Colonic mucosa (tissue), 4 donors: ENCODE measurements at regions of chr14 and their contacts with region 1.

Region 1: GRCh38 chr14:31510222-31510621 is 22.4 kb upstream of the GPR33 start:
- DNase-seq: no peak
- H3K4me3 ChIP-seq: no peak overlapping the region
- H3K27ac ChIP-seq: no peak overlapping the region
- H3K4me1 ChIP-seq: no peaks in the 10 kb centered on the region
- H3K27me3 ChIP-seq: no peaks in the 10 kb centered on the region
- CTCF ChIP-seq: peak; percentile 66

Region 2: GRCh38 chr14:31229638-31230229 is 280.5 kb before region 1 on chr14:
- intact Hi-C with region 1: no loop called
- DNase-seq: peak; percentile 87
- H3K4me3 ChIP-seq: no peak overlapping the region
- H3K27ac ChIP-seq: peak overlapping the region; percentile 84
- H3K4me1 ChIP-seq: peaks cover 5% of the 10 kb centered on the region
- H3K27me3 ChIP-seq: no peaks in the 10 kb centered on the region
- CTCF ChIP-seq: no peak

Region 3: DNA sequence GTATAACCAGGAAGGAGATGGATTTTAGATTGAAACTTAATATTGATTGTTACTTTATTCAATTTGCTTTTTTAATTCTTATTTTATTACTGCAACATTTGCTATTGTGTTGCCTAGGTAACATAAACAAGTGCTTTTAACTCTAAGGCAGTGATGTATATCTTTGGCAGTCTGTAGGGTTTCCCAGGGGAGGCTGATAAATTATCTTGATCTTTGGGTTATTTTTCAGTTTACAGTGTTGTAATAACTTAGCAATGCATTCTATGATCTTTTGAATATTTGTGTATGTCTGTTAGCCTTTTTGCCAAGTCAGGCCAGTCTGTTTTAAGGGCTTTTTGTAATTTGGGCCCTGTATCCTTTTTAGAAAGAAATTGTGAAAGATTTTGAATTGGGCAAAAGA is 45.1 kb before region 1 on chr14:
- intact Hi-C with region 1: no loop called
- DNase-seq: no peak
- H3K4me3 ChIP-seq: no peak overlapping the region
- H3K27ac ChIP-seq: no peak overlapping the region
- H3K4me1 ChIP-seq: no peaks in the 10 kb centered on the region
- H3K27me3 ChIP-seq: no peaks in the 10 kb centered on the region
- CTCF ChIP-seq: no peak

Region 4: DNA sequence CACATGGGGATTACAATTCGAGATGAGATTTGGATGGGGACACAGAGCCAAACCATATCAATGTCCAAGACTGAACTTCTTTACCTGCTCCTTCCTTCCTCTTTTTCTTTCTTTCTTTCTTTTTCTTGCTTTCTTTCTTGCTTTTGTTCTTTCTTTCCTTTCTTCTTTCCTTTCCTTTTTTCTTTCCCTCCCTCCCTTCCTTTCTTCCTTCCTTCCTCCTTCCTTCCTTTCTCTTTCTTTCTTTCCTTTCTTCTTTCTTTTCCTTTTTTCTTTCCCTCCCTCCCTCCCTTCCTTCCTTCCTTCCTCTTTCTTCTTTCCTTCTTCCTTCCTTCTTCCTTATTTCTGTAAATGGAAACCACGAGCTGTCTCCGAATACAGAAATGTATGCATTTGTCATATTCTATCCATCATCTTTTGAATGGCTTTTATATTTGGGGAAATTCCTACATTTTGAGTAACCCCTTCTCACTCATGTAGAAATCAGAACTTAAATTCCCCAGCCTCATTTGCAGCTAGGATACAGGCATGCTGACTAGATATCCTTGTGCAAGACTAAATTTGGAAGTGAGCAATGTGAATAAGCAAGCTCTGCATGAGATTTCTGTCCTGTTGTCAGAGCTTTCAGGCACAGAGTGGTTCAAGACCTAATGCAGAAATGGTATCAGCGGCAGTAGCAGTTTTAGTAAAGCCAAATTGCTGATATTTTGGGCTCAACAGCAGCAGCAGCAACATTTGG is 33.9 kb before region 1 on chr14:
- intact Hi-C with region 1: no loop called
- DNase-seq: no peak
- H3K4me3 ChIP-seq: no peak overlapping the region
- H3K27ac ChIP-seq: no peak overlapping the region
- H3K4me1 ChIP-seq: no peaks in the 10 kb centered on the region
- H3K27me3 ChIP-seq: no peaks in the 10 kb centered on the region
- CTCF ChIP-seq: no peak

Region 5: DNA sequence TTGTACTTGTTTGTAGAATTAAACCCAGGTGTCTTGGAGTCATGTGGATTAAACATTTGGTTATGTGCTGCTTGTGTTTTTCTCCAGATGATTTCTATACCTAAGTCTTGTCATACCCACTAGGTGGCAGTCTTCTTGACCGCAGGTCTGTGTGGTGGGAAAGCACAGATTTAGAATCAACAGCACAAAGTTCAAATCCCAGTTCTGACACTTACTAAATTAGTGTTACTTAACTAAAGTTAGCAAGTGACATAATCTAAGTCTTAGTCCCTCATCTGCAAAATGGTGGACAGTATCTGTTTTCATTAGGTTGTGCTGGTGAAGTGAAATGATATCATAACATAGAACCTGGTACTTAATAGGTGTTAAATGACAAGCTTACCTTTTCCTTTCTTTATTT is 415.9 kb after region 1 on chr14:
- intact Hi-C with region 1: loop called (anchors 10 kb)
- DNase-seq: no peak
- H3K4me3 ChIP-seq: no peak overlapping the region
- H3K27ac ChIP-seq: no peak overlapping the region
- H3K4me1 ChIP-seq: no peaks in the 10 kb centered on the region
- H3K27me3 ChIP-seq: no peaks in the 10 kb centered on the region
- CTCF ChIP-seq: peak; percentile 58

Region 6: GRCh38 chr14:32469388-32470160 is 959.4 kb after region 1 on chr14:
- intact Hi-C with region 1: loop called (anchors 10 kb)
- DNase-seq: no peak
- H3K4me3 ChIP-seq: no peak overlapping the region
- H3K27ac ChIP-seq: no peak overlapping the region
- H3K4me1 ChIP-seq: no peaks in the 10 kb centered on the region
- H3K27me3 ChIP-seq: no peaks in the 10 kb centered on the region
- CTCF ChIP-seq: peak; percentile 34